ENCODE measurements at regions of chr6 and their contacts with region 1.

Region 1: DNA sequence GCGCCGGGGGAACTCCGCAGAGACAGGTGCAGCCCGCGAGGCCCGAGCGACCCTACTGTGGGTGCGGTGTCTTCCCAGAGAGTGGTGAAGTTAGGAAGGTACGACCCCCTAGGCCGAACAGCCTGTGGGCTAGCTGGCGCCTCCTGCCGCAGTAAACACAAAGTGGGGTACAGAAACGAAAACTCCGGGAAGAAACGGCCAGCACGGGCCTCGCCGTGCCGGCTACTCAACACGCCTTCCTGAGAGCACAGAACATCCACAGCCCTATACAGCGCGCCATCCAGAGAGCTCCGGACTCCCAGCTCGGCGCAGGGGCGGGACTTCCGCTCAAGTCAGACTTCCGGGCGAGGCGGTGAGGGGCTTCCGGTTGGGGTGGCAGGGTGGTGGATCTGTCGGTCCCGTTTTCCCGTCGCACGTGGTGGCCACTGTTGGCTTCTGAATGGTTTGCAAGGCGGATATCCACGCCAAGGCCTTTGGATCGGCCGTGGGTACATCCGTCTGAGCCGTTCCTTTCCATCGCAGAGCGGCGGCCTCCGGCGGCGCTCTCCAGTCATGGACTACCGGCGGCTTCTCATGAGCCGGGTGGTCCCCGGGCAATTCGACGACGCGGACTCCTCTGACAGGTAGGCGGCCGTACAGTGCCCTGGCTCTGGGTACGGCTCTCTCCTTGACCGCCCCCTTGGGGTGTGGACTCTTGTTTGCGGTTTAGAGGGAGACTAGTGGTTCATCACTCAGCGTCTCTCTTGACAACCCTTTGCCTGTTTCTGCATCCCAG is at the starts of genes CAGE1 and RIOK1:
- DNase-seq: peak; percentile 97
- H3K4me3 ChIP-seq: peak within 1 kb of the TSS; percentile 43 to 67 (median 61)
- H3K27ac ChIP-seq: peak within 1 kb of the TSS; percentile 95
- H3K4me1 ChIP-seq: peaks cover 23% of the 10 kb centered on the region
- H3K27me3 ChIP-seq: no peaks in the 10 kb centered on the region
- CTCF ChIP-seq: no peak
- total RNA-seq, gene CAGE1: under 0.01 to 0.14 TPM
- total RNA-seq, gene RIOK1: 13.0 to 20.3 TPM

Region 2: DNA sequence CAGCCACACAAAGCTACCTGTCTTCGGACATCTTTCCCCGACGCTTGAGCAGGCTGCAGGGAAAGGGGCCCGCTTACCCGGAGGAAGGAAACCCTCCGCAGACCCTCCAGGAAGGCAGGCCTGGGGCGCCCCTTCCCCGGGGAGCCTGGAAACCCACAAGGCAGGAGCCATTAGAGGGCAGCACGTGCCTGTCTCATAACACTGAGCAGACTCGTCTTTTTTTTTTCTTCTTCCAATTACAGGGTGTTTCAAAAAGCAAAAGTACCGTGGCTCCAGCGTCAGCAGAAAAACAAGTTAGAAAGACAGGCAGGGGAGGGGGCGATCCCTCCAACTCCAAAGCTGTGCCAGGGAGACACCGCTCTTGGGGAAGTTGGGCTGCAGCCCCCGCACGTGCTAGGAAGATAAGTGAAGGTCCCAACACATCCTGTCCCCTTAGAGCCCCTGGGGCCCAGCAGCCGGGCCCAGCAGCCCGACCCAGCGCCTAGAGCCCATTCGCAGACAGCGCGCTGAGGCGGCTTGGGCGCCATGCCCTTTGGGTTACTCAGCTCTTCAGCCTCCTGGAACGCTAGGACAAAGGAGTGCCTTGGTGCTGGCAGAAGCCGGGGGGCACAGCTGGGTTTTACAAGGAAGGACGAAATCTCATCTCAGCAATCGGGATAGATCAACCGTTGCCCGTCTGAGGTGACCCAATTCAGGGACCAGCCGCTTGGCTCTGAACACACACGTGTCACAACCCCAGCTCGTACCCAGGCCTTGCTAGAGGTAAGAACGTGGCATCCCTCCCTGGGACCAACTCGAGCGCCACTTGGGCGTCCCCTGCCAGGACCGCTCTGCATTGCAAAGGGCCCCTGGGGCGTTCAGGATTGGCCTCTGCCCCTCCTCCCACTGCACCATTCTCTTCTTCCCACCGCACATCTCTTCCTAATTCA is 664.8 kb before region 1 on chr6:
- CTCF ChIA-PET with region 1: no interaction called
- dilution Hi-C with region 1: no loop called
- in situ Hi-C with region 1: no loop called
- intact Hi-C with region 1: loop called (anchors 10 kb)
- DNase-seq: peak; percentile 55
- H3K4me3 ChIP-seq: peak overlapping the region; percentile 26 to 47 (median 34)
- H3K27ac ChIP-seq: no peak overlapping the region
- H3K4me1 ChIP-seq: peaks cover 13% of the 10 kb centered on the region
- H3K27me3 ChIP-seq: no peaks in the 10 kb centered on the region
- CTCF ChIP-seq: peak; percentile 49 to 78

Region 3: DNA sequence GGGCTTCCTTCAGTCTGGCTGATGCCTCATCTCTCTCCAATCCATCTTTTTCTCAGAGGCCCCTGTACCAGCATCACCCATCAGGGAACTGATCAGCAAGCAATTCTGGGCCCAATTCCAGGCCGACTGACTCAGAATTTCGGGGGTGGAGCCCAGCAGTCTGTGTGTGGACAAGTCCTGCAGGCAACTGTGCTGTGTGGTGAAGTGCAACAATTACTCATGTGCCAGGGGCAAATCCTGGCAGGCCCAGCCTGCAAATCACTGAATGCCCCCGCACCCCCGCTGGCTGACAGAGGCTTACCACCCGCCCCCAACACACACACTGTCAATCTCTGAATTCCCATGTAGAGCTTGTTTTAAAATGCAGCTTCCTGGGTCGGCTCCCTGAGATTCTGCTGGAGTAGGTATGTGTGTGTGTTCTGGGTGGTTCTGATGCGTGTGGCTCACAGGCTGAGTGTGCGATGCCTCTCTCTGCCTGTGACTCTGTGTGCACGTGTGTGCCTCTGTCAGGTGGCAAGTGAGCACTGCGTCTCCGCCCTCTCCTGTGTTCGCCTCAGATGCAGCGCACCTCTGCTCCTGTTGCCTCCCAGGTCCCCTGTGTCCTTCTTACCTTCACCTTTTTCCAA is 122.1 kb before region 1 on chr6:
- CTCF ChIA-PET with region 1: no interaction called
- dilution Hi-C with region 1: no loop called
- in situ Hi-C with region 1: loop called in 1 of 2 experiments (anchors 10 kb)
- intact Hi-C with region 1: no loop called
- DNase-seq: peak; percentile 99
- H3K4me3 ChIP-seq: peak overlapping the region in 2 of 3 experiments; percentile 28 to 40
- H3K27ac ChIP-seq: peak overlapping the region; percentile 67
- H3K4me1 ChIP-seq: peaks cover 22% of the 10 kb centered on the region
- H3K27me3 ChIP-seq: no peaks in the 10 kb centered on the region
- CTCF ChIP-seq: no peak

Region 4: DNA sequence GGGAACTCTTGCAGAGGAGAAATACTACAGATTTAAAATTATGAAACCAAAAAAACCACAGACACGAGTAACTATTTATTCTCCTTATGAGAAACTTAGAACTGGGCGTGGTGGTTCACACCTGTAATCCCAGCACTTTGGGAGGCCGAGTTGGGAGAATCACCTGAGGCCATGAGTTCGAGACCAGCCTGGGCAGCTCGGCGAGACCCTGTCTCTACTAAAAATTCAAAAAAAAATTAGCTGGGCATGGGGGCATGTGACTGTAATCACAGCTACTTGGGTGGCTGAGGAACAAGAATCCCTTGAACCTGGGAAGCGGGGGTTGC is 113.5 kb before region 1 on chr6:
- CTCF ChIA-PET with region 1: no interaction called
- dilution Hi-C with region 1: no loop called
- in situ Hi-C with region 1: loop called in 1 of 2 experiments (anchors 10 kb)
- intact Hi-C with region 1: loop called (anchors 1 kb)
- DNase-seq: no peak
- H3K4me3 ChIP-seq: no peak overlapping the region
- H3K27ac ChIP-seq: no peak overlapping the region
- H3K4me1 ChIP-seq: no peaks in the 10 kb centered on the region
- H3K27me3 ChIP-seq: no peaks in the 10 kb centered on the region
- CTCF ChIP-seq: no peak

Region 5: GRCh38 chr6:7300926-7301325 is 88.7 kb before region 1 on chr6:
- CTCF ChIA-PET with region 1: no interaction called
- dilution Hi-C with region 1: no loop called
- in situ Hi-C with region 1: loop called (anchors 5 to 10 kb)
- intact Hi-C with region 1: no loop called
- DNase-seq: no peak
- H3K4me3 ChIP-seq: no peak overlapping the region
- H3K27ac ChIP-seq: no peak overlapping the region
- H3K4me1 ChIP-seq: no peaks in the 10 kb centered on the region
- H3K27me3 ChIP-seq: no peaks in the 10 kb centered on the region
- CTCF ChIP-seq: no peak

Region 6: GRCh38 chr6:7312616-7313504 is 76.8 kb before region 1 on chr6 and contains the start of gene SSR1:
- CTCF ChIA-PET with region 1: no interaction called
- dilution Hi-C with region 1: loop called (anchors 5 kb)
- in situ Hi-C with region 1: loop called (anchors 5 to 10 kb)
- intact Hi-C with region 1: loop called (anchors 1 kb)
- DNase-seq: peak; percentile 96
- H3K4me3 ChIP-seq: peak within 1 kb of the TSS; percentile 74 to 97 (median 89)
- H3K27ac ChIP-seq: peak within 1 kb of the TSS; percentile 85
- H3K4me1 ChIP-seq: peaks cover 12% of the 10 kb centered on the region
- H3K27me3 ChIP-seq: no peaks in the 10 kb centered on the region
- CTCF ChIP-seq: no peak
- total RNA-seq, gene SSR1: 93.5 to 179 TPM

Region 7: DNA sequence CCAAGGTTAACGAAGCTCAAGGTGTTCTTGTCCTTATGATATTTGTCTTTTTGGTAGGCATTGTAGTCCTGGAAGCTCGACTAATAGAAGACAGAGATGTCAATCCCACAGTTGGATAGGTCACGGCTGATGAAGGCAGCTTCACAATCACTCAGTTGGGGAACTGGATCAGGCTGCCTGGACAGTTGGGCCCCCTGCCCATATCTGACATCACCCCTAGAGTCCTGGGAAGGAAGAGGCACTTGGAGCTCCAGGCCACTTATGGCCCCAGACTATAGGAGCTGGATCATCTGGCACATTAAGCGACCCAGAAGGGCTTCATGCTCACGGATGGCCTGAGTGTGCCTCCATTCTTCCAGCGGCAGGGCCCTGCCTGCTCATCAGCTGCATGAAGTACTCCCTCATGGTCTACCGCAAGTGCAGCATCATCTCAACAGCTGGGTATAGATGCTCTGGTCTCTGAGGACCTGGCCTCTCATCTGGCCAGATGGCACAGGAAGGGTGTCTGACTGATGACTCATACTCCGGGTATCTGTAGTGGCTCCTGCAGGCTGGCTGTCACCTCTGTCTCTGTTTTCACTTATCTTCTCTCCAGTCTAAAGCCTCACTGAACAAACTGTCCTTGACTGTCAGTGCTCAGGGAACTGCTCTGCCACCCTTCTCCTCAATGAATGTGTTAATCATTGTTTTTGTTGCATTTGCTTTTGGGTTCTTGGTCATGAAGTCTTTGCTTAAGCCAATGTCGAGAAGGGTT is 47.5 kb before region 1 on chr6:
- CTCF ChIA-PET with region 1: no interaction called
- dilution Hi-C with region 1: no loop called
- in situ Hi-C with region 1: no loop called
- intact Hi-C with region 1: loop called (anchors 5 kb)
- DNase-seq: no peak
- H3K4me3 ChIP-seq: no peak overlapping the region
- H3K27ac ChIP-seq: no peak overlapping the region
- H3K4me1 ChIP-seq: peaks cover 3% of the 10 kb centered on the region
- H3K27me3 ChIP-seq: no peaks in the 10 kb centered on the region
- CTCF ChIP-seq: no peak